ENCODE measurements at regions of chr3 and their contacts with region 1.

Region 1: DNA sequence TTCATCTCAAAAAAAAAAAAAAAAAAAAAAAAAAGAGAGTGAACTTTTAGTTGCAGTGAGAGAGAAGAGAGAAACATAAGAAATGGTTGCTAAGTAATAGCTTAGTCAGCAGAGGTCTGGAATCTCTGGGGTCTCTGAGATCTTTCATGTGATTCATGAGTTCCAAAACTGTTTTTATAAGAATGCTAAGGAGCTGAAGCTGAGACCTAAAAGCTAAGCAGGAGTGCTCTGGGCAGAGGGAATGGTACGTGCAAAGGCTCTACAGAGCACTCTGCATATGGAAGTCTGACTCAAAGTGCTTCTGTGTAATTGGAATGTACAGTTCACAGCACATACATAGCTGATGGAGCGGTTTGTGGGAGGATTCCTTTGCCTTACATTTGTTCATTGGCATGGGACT is 66.3 kb upstream of the LRIG1 start:
- DNase-seq: peak; percentile 72
- H3K4me3 ChIP-seq: no peak overlapping the region
- H3K27ac ChIP-seq: peak overlapping the region; percentile 53
- H3K27me3 ChIP-seq: no peaks in the 10 kb centered on the region
- CTCF ChIP-seq: no peak

Region 2: GRCh38 chr3:66483406-66483906 is 83.6 kb before region 1 on chr3:
- CTCF ChIA-PET with region 1: no interaction called
- POLR2A ChIA-PET with region 1: interaction called, 14 read pairs
- DNase-seq: no peak
- H3K4me3 ChIP-seq: no peak overlapping the region
- H3K27ac ChIP-seq: peak overlapping the region; percentile 40
- H3K27me3 ChIP-seq: no peaks in the 10 kb centered on the region
- CTCF ChIP-seq: peak; percentile 20; the same call in 1 of the 2 replicates

Region 3: DNA sequence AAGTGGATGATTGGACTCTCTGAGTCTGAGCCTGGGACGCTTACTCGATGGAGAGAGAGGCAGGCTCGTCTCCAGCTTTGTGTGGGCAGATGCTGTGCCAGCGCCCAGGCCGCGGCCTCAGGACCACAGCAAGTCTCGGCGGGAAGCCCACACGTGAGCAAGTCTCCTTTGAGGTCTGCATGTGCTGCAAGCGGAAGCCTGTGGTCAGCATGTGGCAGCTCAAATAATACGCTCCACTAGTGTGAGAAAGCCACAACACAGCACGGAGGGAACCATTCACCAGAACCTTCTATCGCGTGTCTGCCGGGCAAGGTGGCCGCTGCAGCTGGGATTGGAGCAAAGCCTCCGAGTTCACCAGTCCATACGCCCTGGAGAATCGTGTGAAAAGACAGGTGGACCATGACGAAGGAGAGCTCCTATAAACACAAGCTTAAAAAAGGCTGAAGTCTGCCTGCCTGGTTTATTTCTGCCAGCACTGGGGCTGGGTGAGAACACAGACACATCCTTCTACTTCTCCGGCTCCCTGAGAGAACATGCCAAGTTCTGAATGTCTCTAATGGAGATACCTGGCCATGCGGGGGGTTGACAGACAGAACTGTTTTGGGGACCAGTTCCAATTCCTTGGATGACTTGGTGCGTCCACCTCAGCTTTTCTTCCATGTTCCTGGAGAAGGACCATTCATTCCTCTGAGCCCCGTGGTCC is 15.8 kb after region 1 on chr3:
- CTCF ChIA-PET with region 1: no interaction called
- POLR2A ChIA-PET with region 1: no interaction called
- DNase-seq: no peak
- H3K4me3 ChIP-seq: no peak overlapping the region
- H3K27ac ChIP-seq: no peak overlapping the region
- H3K27me3 ChIP-seq: no peaks in the 10 kb centered on the region
- CTCF ChIP-seq: no peak